ENCODE measurements at regions of chr16 and their contacts with region 1.

Region 1: DNA sequence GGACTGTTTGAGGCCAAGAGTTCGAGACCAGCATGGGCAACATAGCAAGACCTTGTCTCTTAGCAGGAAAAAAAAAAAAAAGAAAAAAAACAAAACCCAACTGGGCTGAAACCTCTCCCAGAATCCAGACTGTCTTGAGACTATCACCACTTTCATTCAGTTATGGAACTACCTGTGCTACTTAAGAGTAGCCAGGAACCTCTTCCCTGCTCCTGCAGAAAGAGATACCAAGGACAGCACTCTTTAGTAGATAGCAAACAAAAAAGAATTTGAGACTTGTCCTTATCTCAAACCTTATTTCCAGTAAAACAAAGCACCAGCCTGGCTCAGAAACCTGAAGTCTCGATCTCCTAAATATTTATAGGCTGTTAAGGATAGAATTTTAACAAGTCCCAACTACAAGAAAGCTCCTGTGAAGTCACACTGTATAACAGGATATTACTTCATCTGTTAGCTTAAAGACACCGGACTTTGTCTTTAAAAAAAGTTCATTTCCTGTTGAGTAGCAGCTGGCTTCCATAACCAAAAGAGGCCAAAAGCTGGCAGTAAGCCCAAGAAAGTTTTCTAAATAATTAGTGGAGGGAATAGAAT is 5.1 kb downstream of the CDR2 start:
- DNase-seq: peak in 4 of 5 donors; percentile 25 to 42 (median 36)
- H3K4me3 ChIP-seq: no peak overlapping the region
- H3K4me3 Mint-ChIP-seq: peak overlapping the region; percentile 31 to 99 (median 60)
- H3K27ac ChIP-seq: peak overlapping the region; percentile 18
- H3K27ac Mint-ChIP-seq: peak overlapping the region; percentile 56 to 91 (median 77)
- H3K4me1 ChIP-seq: peaks cover 85% of the 10 kb centered on the region
- H3K4me1 Mint-ChIP-seq: peaks cover 55 to 92% (median 72%) of the 10 kb centered on the region in 4 donors
- H3K27me3 ChIP-seq: no peaks in the 10 kb centered on the region
- H3K27me3 Mint-ChIP-seq: no peaks in the 10 kb centered on the region

Region 2: DNA sequence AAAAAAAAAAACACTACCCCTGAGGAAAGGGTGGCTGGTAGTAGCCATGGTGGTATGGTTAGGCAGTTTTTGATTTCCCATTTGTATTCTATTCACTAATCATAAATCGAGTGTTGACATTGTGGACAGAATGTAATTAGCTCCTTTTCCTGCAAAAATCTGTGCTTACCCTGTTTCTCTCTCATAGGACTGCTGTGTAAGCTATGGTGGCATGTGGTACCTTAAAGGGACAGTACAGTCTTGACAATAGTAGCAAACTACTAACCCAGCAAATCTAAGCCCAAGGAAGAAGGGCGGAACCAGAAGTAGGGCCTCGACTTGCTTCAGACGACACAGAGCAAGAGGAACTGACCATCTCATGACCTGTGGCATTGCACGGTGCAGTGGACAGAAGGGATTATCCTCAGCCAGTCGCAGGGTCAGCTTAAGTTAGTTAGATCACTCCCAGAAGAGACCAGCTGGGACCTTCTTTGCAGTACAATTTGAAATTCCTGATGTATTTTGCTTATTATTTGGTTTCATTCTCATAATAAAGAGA is 35.8 kb before region 1 on chr16:
- CTCF ChIA-PET with region 1: interaction called, 3 read pairs
- POLR2A ChIA-PET with region 1: interaction called, 15 read pairs
- intact Hi-C with region 1: loop called (anchors 5 kb)
- DNase-seq: no peak
- H3K4me3 ChIP-seq: no peak overlapping the region
- H3K4me3 Mint-ChIP-seq: no peak overlapping the region
- H3K27ac ChIP-seq: no peak overlapping the region
- H3K27ac Mint-ChIP-seq: peak overlapping the region in 3 of 7 donors; percentile 41 to 74 (median 57)
- H3K4me1 ChIP-seq: no peaks in the 10 kb centered on the region
- H3K4me1 Mint-ChIP-seq: peaks cover 14 to 28% (median 19%) of the 10 kb centered on the region in 4 donors
- H3K27me3 ChIP-seq: no peaks in the 10 kb centered on the region
- H3K27me3 Mint-ChIP-seq: no peaks in the 10 kb centered on the region

Region 3: GRCh38 chr16:22388101-22388644 is 18.9 kb after region 1 on chr16:
- CTCF ChIA-PET with region 1: no interaction called
- POLR2A ChIA-PET with region 1: no interaction called
- intact Hi-C with region 1: no loop called
- DNase-seq: no peak
- H3K4me3 ChIP-seq: no peak overlapping the region
- H3K4me3 Mint-ChIP-seq: no peak overlapping the region
- H3K27ac ChIP-seq: no peak overlapping the region
- H3K27ac Mint-ChIP-seq: peak overlapping the region in 3 of 7 donors; percentile 6 to 32 (median 32)
- H3K4me1 ChIP-seq: peaks cover 3% of the 10 kb centered on the region
- H3K4me1 Mint-ChIP-seq: peaks cover 5 to 15% (median 6%) of the 10 kb centered on the region in 4 donors
- H3K27me3 ChIP-seq: no peaks in the 10 kb centered on the region
- H3K27me3 Mint-ChIP-seq: no peaks in the 10 kb centered on the region